Caki2 (cell line): ENCODE measurements at regions of chr7 and their contacts with region 1.

Region 1: GRCh38 chr7:147569116-147569913 is 1021.3 kb upstream of the C7orf33 start:
- DNase-seq: no peak

Region 2: DNA sequence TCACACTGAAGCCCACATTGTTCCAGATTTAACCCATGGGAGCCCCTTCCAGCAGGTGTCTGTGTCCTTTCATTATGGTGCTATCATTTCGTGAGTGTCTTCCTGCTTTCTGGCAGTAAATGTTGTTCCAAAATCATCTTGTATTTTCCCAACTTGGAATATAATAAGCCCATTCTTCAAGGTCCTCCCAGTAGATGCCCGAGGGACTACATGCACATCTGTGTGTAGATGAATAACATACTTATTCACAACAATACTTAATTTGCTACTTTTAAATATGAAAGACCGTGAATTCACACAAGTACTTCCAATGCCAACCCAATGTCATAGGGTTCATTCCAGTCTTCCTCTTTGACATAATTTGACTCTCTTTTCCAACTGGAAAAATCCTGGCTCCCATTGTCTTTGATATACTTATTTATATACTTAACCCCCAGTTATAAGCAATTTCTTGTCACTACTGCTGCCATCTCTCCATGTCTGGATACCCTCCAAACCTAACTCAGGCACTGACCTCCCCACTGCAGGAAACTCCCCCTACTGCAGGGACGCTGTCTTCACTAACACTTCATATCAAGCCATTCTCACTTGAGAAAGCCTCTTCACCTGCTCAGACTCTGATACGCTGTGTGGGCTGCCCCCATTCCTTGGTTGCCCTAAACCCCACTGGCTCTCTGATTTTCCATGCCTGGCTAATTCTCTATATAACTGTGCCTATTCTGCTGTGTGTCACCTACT is 333.5 kb before region 1 on chr7:
- in situ Hi-C with region 1: loop called (anchors 10 kb)
- DNase-seq: no peak